Activated CD4-positive, alpha-beta T cell treated with anti-CD3 and anti-CD28 coated beads, Interleukin-2, amount 10 ng/mL, durations not matched to agents 7 days and 5 days (primary cell): ENCODE measurements at regions of chr19 and their contacts with region 1.

Region 1: DNA sequence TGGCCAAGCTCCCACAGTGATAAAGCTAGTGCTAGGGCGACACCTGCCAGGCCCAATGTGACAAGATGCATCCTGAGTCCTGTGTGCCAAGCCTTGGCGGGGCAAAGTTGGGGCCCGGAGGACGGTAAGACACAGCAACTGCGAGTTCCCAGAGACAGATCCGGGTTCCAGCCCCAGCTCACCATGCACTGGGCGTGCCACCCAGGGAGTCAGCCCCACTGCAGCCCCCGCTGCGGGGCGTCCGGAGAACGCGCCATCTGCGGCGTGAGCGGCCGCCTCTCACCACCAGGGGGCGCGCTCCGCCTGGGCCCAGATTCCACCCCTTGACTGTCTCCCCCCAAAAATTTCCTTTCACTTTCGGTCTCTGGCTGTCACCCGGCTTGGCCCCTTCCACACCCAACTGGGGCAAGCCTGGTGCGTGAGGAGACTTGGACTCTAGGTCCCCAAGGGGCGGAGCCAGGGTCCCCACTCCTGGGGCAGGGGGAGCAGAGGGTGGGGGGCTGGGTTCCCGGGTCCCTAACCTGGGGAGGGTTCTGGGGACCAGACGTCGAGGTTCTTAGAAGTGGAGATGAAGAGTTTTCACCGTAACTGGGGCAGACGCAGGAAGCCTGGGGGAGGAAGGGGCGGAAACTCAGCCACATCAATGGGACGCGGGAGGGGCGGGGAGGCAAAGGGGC is at the start of gene FLT3LG:
- DNase-seq: peak; percentile 99
- H3K4me3 Mint-ChIP-seq: peak within 1 kb of the TSS; percentile 91
- H3K27ac Mint-ChIP-seq: peak within 1 kb of the TSS; percentile 85
- H3K4me1 Mint-ChIP-seq: peaks cover 54% of the 10 kb centered on the region
- H3K27me3 Mint-ChIP-seq: no peaks in the 10 kb centered on the region
- total RNA-seq, gene FLT3LG: 348 to 355 TPM

Region 2: GRCh38 chr19:49391581-49392399 is 82.2 kb before region 1 on chr19:
- CTCF ChIA-PET with region 1: interaction called, 10 read pairs
- POLR2A ChIA-PET with region 1: no interaction called
- DNase-seq: peak; percentile 87
- H3K4me3 Mint-ChIP-seq: no peak overlapping the region
- H3K27ac Mint-ChIP-seq: no peak overlapping the region
- H3K4me1 Mint-ChIP-seq: peaks cover 31% of the 10 kb centered on the region
- H3K27me3 Mint-ChIP-seq: peaks cover 4% of the 10 kb centered on the region

Region 3: GRCh38 chr19:49451430-49452181 is 22.4 kb before region 1 on chr19 and contains the start of gene PIH1D1:
- CTCF ChIA-PET with region 1: interaction called, 17 read pairs
- POLR2A ChIA-PET with region 1: interaction called, 4 read pairs
- DNase-seq: peak; percentile 99
- H3K4me3 Mint-ChIP-seq: peak within 1 kb of the TSS; percentile 98
- H3K27ac Mint-ChIP-seq: peak within 1 kb of the TSS; percentile 100
- H3K4me1 Mint-ChIP-seq: peaks cover 62% of the 10 kb centered on the region
- H3K27me3 Mint-ChIP-seq: no peaks in the 10 kb centered on the region
- total RNA-seq, gene PIH1D1: 146 to 176 TPM

Region 4: DNA sequence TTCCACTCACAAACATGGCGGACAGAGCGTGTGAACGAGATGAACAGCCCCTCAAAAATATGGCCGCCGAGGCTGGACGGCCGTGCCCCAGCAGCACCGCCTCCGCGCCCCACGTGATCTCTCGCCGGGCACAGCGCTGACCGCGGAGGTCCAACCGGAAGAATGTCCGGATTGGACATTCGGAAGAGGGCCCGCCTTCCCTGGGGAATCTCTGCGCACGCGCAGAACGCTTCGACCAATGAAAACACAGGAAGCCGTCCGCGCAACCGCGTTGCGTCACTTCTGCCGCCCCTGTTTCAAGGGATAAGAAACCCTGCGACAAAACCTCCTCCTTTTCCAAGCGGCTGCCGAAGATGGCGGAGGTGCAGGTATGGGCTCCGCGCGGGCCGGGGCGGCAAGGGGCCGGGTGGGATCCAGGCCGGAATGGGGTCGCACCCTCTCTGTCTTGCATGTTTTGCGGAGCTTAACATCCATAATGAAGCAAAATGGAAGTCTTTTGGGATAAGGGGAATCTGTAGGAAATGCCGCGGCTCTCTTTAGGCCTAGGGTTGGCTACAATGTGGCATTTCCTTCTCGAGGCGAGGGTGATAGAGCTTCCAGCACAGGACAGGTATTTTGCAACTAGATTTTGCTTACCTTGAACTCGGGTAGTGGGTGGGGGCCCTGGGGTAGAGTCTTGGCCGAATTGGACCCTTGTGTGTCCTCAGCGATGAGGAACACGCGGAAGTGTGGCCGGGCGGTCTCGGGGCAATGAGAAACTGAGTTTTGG is 13.5 kb after region 1 on chr19 and contains the start of gene RPL13A:
- CTCF ChIA-PET with region 1: interaction called, 12 read pairs
- POLR2A ChIA-PET with region 1: interaction called, 4 read pairs
- DNase-seq: peak; percentile 100
- H3K4me3 Mint-ChIP-seq: peak within 1 kb of the TSS; percentile 89
- H3K27ac Mint-ChIP-seq: peak within 1 kb of the TSS; percentile 91
- H3K4me1 Mint-ChIP-seq: peaks cover 45% of the 10 kb centered on the region
- H3K27me3 Mint-ChIP-seq: no peaks in the 10 kb centered on the region
- total RNA-seq, gene RPL13A: 2,327 to 2,349 TPM

Region 5: DNA sequence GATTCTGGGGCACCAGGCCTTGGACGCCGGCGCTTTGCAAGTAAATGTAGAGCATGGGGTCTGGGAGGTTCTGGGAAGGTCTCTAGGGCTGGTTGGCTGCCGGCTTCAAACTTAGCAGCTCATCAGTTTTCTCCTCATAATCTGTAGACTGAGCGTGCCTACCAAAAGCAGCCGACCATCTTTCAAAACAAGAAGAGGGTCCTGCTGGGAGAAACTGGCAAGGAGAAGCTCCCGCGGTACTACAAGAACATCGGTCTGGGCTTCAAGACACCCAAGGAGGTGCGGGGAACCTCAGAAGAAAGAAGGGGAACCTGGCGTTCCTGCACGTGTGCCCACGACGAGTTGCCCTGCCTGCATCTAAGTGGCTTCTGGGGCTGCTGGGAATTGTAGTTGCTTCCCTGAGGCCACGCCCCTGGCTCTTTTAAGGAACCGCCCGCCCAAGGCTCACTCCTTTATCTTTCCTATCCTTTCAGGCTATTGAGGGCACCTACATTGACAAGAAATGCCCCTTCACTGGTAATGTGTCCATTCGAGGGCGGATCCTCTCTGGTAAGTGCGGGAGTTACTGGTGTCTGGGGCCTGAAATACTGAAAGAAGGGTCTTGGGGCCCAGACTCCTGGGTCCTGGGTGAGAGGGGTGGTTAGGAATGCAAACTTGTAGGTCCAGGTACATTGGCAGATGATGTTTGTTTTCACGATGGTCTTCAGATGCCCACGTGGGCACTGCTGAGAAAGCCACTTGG is 23.2 kb after region 1 on chr19:
- CTCF ChIA-PET with region 1: interaction called, 14 read pairs
- POLR2A ChIA-PET with region 1: interaction called, 5 read pairs
- DNase-seq: peak; percentile 89
- H3K4me3 Mint-ChIP-seq: peak overlapping the region; percentile 100
- H3K27ac Mint-ChIP-seq: peak overlapping the region; percentile 99
- H3K4me1 Mint-ChIP-seq: peaks cover 52% of the 10 kb centered on the region
- H3K27me3 Mint-ChIP-seq: no peaks in the 10 kb centered on the region

Region 6: GRCh38 chr19:49520705-49521319 is 46.8 kb after region 1 on chr19:
- CTCF ChIA-PET with region 1: no interaction called
- POLR2A ChIA-PET with region 1: no interaction called
- DNase-seq: no peak
- H3K4me3 Mint-ChIP-seq: no peak overlapping the region
- H3K27ac Mint-ChIP-seq: no peak overlapping the region
- H3K4me1 Mint-ChIP-seq: peaks cover 14% of the 10 kb centered on the region
- H3K27me3 Mint-ChIP-seq: no peaks in the 10 kb centered on the region